Prostate gland (tissue), 2 donors: ENCODE measurements at regions of chr13 and their contacts with region 1.

Region 1: GRCh38 chr13:52450012-52450792 is at the start of gene VPS36:
- DNase-seq: peak; percentile 96
- H3K4me3 ChIP-seq: peak within 1 kb of the TSS; percentile 92 to 94
- H3K27ac ChIP-seq: peak within 1 kb of the TSS; percentile 89 to 96
- H3K4me1 ChIP-seq: peaks cover 2% of the 10 kb centered on the region
- H3K27me3 ChIP-seq: no peaks in the 10 kb centered on the region
- CTCF ChIP-seq: peak; percentile 99 to 100 (median 100)
- POLR2A ChIP-seq: peak; percentile 76
- total RNA-seq, gene VPS36: 43.9 to 46.6 TPM

Region 2: GRCh38 chr13:51452361-51453206 is 997.6 kb before region 1 on chr13 and contains the start of gene INTS6:
- intact Hi-C with region 1: loop called (anchors 10 kb)
- DNase-seq: peak; percentile 100
- H3K4me3 ChIP-seq: peak within 1 kb of the TSS; percentile 92 to 93
- H3K27ac ChIP-seq: peak within 1 kb of the TSS; percentile 99 to 100
- H3K4me1 ChIP-seq: no peaks in the 10 kb centered on the region
- H3K27me3 ChIP-seq: no peaks in the 10 kb centered on the region
- CTCF ChIP-seq: no peak
- POLR2A ChIP-seq: peak; percentile 100
- total RNA-seq, gene INTS6: 37.4 to 59.0 TPM

Region 3: DNA sequence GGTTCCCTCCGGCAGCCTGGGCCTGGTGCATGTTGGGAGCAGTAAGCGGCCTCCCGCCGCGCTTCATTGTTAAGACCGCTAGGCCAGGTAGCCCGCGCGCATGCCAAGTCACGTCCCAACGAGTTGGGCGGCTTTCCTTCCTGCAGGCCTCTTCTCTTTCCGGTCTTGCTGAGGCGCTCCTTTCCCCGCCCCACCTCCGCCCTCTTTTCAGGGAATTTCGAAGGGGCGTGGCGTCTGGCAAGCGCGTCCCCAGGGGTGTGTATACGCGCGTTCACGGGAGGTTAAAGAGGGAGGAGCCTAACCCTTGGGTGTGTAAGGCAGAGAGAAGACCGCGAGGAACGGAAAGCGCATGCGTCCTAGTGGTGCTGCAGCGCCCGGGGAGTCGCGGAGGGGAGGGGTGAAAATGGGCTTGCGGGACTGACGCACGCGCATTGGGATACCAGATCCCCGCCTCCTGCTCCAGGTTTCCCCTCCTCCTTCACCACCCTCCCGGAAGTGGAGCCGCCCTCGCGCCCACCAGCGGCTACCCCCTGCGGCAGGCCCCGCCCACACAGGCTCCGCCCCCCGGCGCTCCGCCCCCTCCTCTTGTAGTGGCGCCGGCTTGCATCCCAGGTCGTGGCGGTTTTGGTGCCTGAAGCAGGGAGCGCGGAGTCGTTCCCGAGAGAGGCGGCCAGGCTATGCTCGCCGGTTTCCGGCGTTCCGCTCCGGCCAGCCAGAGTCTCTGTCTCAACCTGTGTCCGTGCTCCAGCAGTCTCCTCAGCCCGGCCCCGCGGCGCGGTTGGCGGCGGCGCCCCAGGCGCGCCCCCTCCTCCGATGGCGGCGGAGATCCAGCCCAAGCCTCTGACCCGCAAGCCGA is 866.1 kb before region 1 on chr13 and contains the start of gene WDFY2:
- intact Hi-C with region 1: loop called (anchors 10 kb)
- DNase-seq: peak; percentile 100
- H3K4me3 ChIP-seq: peak within 1 kb of the TSS; percentile 83 to 90
- H3K27ac ChIP-seq: peak within 1 kb of the TSS; percentile 91 to 92
- H3K4me1 ChIP-seq: no peaks in the 10 kb centered on the region
- H3K27me3 ChIP-seq: no peaks in the 10 kb centered on the region
- CTCF ChIP-seq: peak in 2 of 4 experiments; percentile 25 to 34
- POLR2A ChIP-seq: peak; percentile 97
- total RNA-seq, gene WDFY2: 7.9 to 23.2 TPM

Region 4: DNA sequence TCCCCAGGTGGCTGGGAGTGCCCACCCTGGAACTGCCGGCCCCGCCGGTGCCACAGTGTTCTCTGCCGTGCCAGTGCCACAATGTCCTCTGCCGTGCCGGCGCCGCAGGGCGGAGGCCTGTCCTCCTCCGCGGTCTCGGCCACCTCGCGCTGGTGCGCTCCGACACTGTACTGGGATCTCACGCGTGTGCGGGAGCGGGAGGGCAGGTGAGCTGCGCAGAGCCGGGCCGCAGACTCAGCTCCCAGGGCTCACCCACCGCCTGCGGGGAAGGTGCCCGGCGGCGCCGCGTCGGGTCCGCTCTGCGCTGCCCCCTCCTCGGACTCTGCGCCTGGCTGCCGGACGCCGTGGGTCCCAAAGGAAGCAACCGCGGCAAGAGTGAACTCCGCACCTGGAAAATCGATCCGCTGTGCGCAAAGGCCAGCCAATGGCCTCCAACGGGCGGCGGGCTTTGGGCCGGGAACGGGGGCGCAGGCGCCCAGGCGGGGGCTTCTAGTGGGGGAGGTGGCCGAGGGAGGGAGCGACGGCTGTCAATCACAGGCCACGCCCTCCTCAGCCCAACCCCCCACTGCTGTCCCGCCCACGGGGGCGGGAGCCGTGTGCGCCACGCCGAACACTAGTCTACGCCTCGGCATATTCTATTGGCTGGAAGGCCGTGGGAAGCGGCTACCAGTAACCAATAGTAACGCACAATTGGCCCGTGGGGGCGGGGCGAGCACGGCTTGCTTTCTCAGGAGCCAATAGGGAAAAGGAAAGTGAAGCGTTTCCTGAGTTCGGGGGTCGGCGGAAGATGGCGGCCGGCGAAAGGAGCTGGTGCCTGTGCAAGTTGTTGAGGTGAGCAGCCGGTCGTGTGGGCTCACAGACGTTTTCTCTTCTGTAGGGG is 438.3 kb before region 1 on chr13 and contains the start of gene ALG11:
- intact Hi-C with region 1: loop called (anchors 5 kb)
- DNase-seq: peak; percentile 99
- H3K4me3 ChIP-seq: peak within 1 kb of the TSS; percentile 65 to 67
- H3K27ac ChIP-seq: peak within 1 kb of the TSS; percentile 79 to 81
- H3K4me1 ChIP-seq: no peaks in the 10 kb centered on the region
- H3K27me3 ChIP-seq: no peaks in the 10 kb centered on the region
- CTCF ChIP-seq: peak in 2 of 4 experiments; percentile 4 to 12
- POLR2A ChIP-seq: no peak
- total RNA-seq, gene ALG11: 28.9 to 34.1 TPM

Region 5: GRCh38 chr13:52348983-52349780 is 101.0 kb before region 1 on chr13:
- intact Hi-C with region 1: loop called (anchors 5 kb)
- DNase-seq: no peak
- H3K4me3 ChIP-seq: no peak overlapping the region
- H3K27ac ChIP-seq: no peak overlapping the region
- H3K4me1 ChIP-seq: no peaks in the 10 kb centered on the region
- H3K27me3 ChIP-seq: no peaks in the 10 kb centered on the region
- CTCF ChIP-seq: no peak
- POLR2A ChIP-seq: no peak

Region 6: DNA sequence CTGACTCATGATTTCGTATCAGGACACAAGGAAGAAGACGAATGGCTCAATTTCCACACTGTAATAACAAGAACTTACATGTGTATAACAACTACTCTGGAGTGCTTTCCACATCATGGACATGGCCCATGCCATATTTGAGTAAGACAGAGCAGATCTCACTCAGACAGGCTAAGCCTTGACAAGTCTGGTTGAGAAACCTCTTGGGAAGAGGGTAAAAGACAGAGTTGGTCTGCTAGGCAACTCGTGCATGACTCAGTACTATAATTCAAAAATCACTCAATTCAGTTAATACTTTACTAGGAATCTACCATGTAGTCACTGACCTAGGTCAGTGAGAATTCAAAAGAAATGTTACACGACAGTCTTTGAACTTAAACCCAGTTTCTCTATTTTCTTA is 38.6 kb before region 1 on chr13:
- intact Hi-C with region 1: no loop called
- DNase-seq: no peak
- H3K4me3 ChIP-seq: no peak overlapping the region
- H3K27ac ChIP-seq: no peak overlapping the region
- H3K4me1 ChIP-seq: no peaks in the 10 kb centered on the region
- H3K27me3 ChIP-seq: no peaks in the 10 kb centered on the region
- CTCF ChIP-seq: no peak
- POLR2A ChIP-seq: no peak

Region 7: GRCh38 chr13:52652196-52652979 is 202.2 kb after region 1 on chr13 and contains the start of gene SUGT1:
- intact Hi-C with region 1: loop called (anchors 5 kb)
- DNase-seq: peak; percentile 98
- H3K4me3 ChIP-seq: peak within 1 kb of the TSS; percentile 55 to 78
- H3K27ac ChIP-seq: peak within 1 kb of the TSS; percentile 96 to 97
- H3K4me1 ChIP-seq: peaks cover 12% of the 10 kb centered on the region
- H3K27me3 ChIP-seq: no peaks in the 10 kb centered on the region
- CTCF ChIP-seq: peak; percentile 15 to 66 (median 48)
- POLR2A ChIP-seq: peak; percentile 67
- total RNA-seq, gene SUGT1: 34.4 to 47.8 TPM

Region 8: DNA sequence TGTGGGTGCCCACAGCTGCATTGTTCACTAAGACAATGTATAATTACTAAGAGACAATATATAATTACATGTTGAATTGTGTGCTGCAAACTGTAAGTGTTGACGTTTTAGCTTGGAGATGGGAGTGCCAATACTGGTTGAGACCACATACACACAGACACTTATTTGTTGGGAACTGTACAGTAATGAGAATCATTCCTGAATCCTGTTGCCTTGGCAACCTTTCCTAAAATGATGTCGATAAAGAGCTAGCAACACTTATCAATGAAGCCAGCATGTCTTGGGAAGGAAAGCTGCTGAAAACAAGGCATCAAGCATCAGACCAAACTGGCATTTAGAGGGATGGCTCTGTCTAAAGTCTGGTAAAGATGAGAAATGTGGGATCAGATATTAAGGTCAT is 347.0 kb after region 1 on chr13:
- intact Hi-C with region 1: no loop called
- DNase-seq: no peak
- H3K4me3 ChIP-seq: no peak overlapping the region
- H3K27ac ChIP-seq: no peak overlapping the region
- H3K4me1 ChIP-seq: no peaks in the 10 kb centered on the region
- H3K27me3 ChIP-seq: no peaks in the 10 kb centered on the region
- CTCF ChIP-seq: no peak
- POLR2A ChIP-seq: no peak

Region 9: DNA sequence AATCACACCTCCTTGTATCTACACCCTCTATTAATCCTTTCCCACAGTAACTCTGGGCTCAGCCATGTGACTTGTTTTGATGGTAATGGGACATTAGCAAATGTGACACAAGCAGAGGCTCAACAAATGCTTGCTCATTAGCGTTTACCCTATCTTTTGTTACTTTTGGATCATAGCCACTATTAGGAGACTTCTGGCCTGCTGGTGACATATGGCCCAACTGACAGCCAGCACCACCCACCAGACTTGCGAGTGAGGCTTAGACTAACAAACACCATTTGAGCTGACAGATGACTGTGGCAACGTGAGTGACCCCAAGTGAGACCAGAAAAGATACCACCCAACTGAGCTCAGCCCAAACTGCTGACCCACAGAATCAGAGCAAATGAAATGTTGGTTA is 732.5 kb after region 1 on chr13:
- intact Hi-C with region 1: no loop called
- DNase-seq: no peak
- H3K4me3 ChIP-seq: no peak overlapping the region
- H3K27ac ChIP-seq: no peak overlapping the region
- H3K4me1 ChIP-seq: no peaks in the 10 kb centered on the region
- H3K27me3 ChIP-seq: no peaks in the 10 kb centered on the region
- CTCF ChIP-seq: no peak
- POLR2A ChIP-seq: no peak